ENCODE measurements at regions of chrX and their contacts with region 1.

Region 1: GRCh38 chrX:106302242-106302662 is 134.1 kb downstream of the PWWP3B start:
- DNase-seq: peak; percentile 48
- ATAC-seq: no peak
- H3K4me3 ChIP-seq: no peak overlapping the region
- H3K27ac ChIP-seq: no peak overlapping the region
- H3K4me1 ChIP-seq: peaks cover 15 to 33% of the 10 kb centered on the region in 2 experiments
- H3K27me3 ChIP-seq: no peaks in the 10 kb centered on the region
- CTCF ChIP-seq: no peak
- POLR2A ChIP-seq: no peak
- RAD21 ChIP-seq: no peak

Region 2: DNA sequence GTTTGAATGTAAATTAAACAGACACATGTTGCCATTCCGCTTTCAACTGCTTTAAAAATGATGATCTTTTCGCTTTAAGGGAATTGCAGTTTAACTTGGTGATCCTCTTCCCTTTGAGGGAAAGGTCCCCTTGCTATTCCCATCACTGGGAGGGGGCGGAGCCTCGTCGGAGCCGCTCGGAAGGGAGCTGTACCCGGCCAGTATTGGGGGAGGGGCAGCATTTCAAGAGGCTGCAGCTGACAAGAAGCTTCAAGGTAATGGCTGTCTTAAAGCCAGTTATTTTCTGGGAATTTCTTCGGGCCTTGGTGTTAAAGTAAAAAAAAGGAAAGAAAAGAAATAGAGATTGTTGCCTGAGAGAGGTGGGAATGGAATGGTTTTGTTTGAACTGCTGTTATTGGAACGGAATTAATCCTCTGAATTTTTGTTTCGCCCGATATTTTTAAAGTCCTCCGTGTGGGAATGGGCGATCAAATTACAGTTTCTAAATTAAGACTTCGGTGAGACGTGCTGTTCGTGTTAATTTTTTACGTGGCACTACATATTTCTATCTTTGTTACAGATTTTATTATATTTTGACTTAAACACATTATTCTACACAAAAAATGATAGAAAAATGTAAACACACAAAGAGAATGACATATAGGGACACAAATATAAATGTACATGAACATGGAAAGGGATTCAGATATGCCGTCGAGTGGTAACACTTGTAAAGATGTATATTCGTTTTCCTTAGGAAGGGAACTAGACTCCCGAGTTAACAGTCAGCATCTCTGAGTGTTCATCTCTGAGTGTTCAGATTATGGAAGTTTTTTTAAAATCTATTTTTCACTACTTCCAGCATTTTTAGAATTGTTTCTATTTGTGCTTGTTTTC is 124.9 kb before region 1 on chrX:
- CTCF ChIA-PET with region 1: no interaction called
- POLR2A ChIA-PET with region 1: no interaction called
- RAD21 ChIA-PET with region 1: no interaction called
- intact Hi-C with region 1: loop called (anchors 10 kb)
- DNase-seq: no peak
- ATAC-seq: no peak
- H3K4me3 ChIP-seq: no peak overlapping the region
- H3K27ac ChIP-seq: no peak overlapping the region
- H3K4me1 ChIP-seq: no peaks in the 10 kb centered on the region
- H3K27me3 ChIP-seq: no peaks in the 10 kb centered on the region
- CTCF ChIP-seq: no peak
- POLR2A ChIP-seq: no peak
- RAD21 ChIP-seq: no peak

Measured in HCT116 (cell line).